CD8-positive, alpha-beta T cell (primary cell): ENCODE measurements at regions of chr3 and their contacts with region 1.

Region 1: GRCh38 chr3:128623762-128624176 is 26.8 kb downstream of the RPN1 start:
- DNase-seq: no peak
- ATAC-seq: no peak
- H3K4me3 ChIP-seq: no peak overlapping the region
- H3K4me3 Mint-ChIP-seq: no peak overlapping the region
- H3K27ac ChIP-seq: no peak overlapping the region
- H3K27ac Mint-ChIP-seq: peak overlapping the region; percentile 28
- H3K4me1 ChIP-seq: peaks cover 3% of the 10 kb centered on the region
- H3K4me1 Mint-ChIP-seq: peaks cover 22% of the 10 kb centered on the region
- H3K27me3 ChIP-seq: no peaks in the 10 kb centered on the region
- H3K27me3 Mint-ChIP-seq: no peaks in the 10 kb centered on the region
- CTCF ChIP-seq: no peak

Region 2: DNA sequence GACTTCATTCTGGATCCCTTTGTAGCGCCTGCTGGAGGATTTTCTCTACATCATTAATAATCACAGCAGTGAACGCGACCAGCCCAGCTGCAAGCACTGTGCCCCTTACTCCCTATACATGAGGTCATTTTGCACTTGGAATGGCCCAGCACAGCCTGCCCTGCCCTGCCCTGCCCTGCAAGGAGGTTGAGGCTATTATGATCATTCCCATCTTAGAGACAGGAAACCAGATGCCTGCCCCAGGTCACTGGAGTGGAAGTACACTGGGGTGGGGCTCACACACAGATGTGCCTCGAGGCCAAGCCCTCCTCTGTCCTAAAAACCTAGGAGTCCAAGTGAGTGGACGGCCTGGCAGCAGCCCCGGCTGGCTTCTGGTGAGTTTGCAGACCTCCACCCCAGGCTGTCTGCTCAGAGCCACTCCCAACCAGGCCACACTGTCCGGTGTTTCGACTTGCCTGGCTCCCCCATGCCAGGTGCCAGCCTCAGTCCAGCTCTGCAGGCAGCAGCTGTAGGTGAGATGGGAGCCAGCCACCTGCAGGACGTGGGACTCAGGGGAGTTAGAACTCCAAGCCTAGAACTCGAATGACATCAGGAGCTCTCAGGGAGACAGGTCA is 601.9 kb before region 1 on chr3:
- CTCF ChIA-PET with region 1: no interaction called
- POLR2A ChIA-PET with region 1: no interaction called
- intact Hi-C with region 1: no loop called
- DNase-seq: no peak
- ATAC-seq: no peak
- H3K4me3 ChIP-seq: no peak overlapping the region
- H3K4me3 Mint-ChIP-seq: no peak overlapping the region
- H3K27ac ChIP-seq: no peak overlapping the region
- H3K27ac Mint-ChIP-seq: no peak overlapping the region
- H3K4me1 ChIP-seq: no peaks in the 10 kb centered on the region
- H3K4me1 Mint-ChIP-seq: no peaks in the 10 kb centered on the region
- H3K27me3 ChIP-seq: no peaks in the 10 kb centered on the region
- H3K27me3 Mint-ChIP-seq: no peaks in the 10 kb centered on the region
- CTCF ChIP-seq: no peak

Region 3: DNA sequence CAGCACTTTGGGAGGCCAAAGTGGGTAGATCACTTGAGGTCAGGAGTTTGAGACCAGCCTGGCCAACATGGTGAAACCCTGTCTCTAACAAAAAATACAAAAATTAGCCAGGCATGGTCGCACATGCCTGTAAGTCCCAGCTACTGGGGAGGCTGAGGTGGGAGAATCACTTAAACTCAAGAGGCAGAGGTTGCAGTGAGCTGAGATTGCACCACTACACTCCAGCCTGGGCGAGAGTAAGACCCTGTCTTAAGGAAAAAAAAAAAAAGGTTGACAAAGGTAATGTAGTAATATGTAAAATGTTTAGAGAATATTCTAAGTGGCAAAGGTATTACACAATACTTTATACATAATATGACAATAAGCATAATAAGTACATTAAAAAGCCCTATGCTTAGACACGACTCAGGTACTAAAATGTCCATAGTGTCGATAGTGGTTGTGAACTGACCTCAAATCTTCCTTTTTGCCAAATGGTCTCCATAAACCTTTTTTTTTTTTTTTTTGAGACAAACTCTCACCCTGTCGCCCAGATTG is 10.4 kb after region 1 on chr3:
- CTCF ChIA-PET with region 1: interaction called, 3 read pairs
- POLR2A ChIA-PET with region 1: no interaction called
- intact Hi-C with region 1: loop called in 1 of 2 experiments (anchors 2 kb)
- DNase-seq: no peak
- ATAC-seq: no peak
- H3K4me3 ChIP-seq: no peak overlapping the region
- H3K4me3 Mint-ChIP-seq: no peak overlapping the region
- H3K27ac ChIP-seq: no peak overlapping the region
- H3K27ac Mint-ChIP-seq: no peak overlapping the region
- H3K4me1 ChIP-seq: no peaks in the 10 kb centered on the region
- H3K4me1 Mint-ChIP-seq: peaks cover 17% of the 10 kb centered on the region
- H3K27me3 ChIP-seq: no peaks in the 10 kb centered on the region
- H3K27me3 Mint-ChIP-seq: no peaks in the 10 kb centered on the region
- CTCF ChIP-seq: no peak

Region 4: GRCh38 chr3:128655531-128655930 is 31.8 kb after region 1 on chr3:
- CTCF ChIA-PET with region 1: interaction called, 23 read pairs
- POLR2A ChIA-PET with region 1: interaction called, 4 read pairs
- intact Hi-C with region 1: loop called (anchors 1 to 2 kb)
- DNase-seq: no peak
- ATAC-seq: no peak
- H3K4me3 ChIP-seq: no peak overlapping the region
- H3K4me3 Mint-ChIP-seq: peak overlapping the region; percentile 59
- H3K27ac ChIP-seq: no peak overlapping the region
- H3K27ac Mint-ChIP-seq: no peak overlapping the region
- H3K4me1 ChIP-seq: peaks cover 4% of the 10 kb centered on the region
- H3K4me1 Mint-ChIP-seq: peaks cover 14% of the 10 kb centered on the region
- H3K27me3 ChIP-seq: no peaks in the 10 kb centered on the region
- H3K27me3 Mint-ChIP-seq: no peaks in the 10 kb centered on the region
- CTCF ChIP-seq: no peak

Region 5: GRCh38 chr3:128984596-128984995 is 360.8 kb after region 1 on chr3:
- CTCF ChIA-PET with region 1: no interaction called
- POLR2A ChIA-PET with region 1: no interaction called
- intact Hi-C with region 1: no loop called
- DNase-seq: no peak
- ATAC-seq: no peak
- H3K4me3 ChIP-seq: no peak overlapping the region
- H3K4me3 Mint-ChIP-seq: no peak overlapping the region
- H3K27ac ChIP-seq: no peak overlapping the region
- H3K27ac Mint-ChIP-seq: no peak overlapping the region
- H3K4me1 ChIP-seq: no peaks in the 10 kb centered on the region
- H3K4me1 Mint-ChIP-seq: no peaks in the 10 kb centered on the region
- H3K27me3 ChIP-seq: no peaks in the 10 kb centered on the region
- H3K27me3 Mint-ChIP-seq: no peaks in the 10 kb centered on the region
- CTCF ChIP-seq: no peak

Region 6: GRCh38 chr3:129316131-129317013 is 692.6 kb after region 1 on chr3:
- CTCF ChIA-PET with region 1: no interaction called
- POLR2A ChIA-PET with region 1: no interaction called
- intact Hi-C with region 1: no loop called
- DNase-seq: peak; percentile 79 to 96 (median 89)
- ATAC-seq: peak; percentile 45
- H3K4me3 ChIP-seq: peak overlapping the region; percentile 94 to 98
- H3K4me3 Mint-ChIP-seq: peak overlapping the region; percentile 95
- H3K27ac ChIP-seq: peak overlapping the region; percentile 55 to 84
- H3K27ac Mint-ChIP-seq: peak overlapping the region; percentile 88
- H3K4me1 ChIP-seq: peaks cover 16% of the 10 kb centered on the region
- H3K4me1 Mint-ChIP-seq: peaks cover 25% of the 10 kb centered on the region
- H3K27me3 ChIP-seq: no peaks in the 10 kb centered on the region
- H3K27me3 Mint-ChIP-seq: no peaks in the 10 kb centered on the region
- CTCF ChIP-seq: peak; percentile 68